Motor neuron (in vitro differentiated cells): ENCODE measurements at regions of chr16 and their contacts with region 1.

Region 1: DNA sequence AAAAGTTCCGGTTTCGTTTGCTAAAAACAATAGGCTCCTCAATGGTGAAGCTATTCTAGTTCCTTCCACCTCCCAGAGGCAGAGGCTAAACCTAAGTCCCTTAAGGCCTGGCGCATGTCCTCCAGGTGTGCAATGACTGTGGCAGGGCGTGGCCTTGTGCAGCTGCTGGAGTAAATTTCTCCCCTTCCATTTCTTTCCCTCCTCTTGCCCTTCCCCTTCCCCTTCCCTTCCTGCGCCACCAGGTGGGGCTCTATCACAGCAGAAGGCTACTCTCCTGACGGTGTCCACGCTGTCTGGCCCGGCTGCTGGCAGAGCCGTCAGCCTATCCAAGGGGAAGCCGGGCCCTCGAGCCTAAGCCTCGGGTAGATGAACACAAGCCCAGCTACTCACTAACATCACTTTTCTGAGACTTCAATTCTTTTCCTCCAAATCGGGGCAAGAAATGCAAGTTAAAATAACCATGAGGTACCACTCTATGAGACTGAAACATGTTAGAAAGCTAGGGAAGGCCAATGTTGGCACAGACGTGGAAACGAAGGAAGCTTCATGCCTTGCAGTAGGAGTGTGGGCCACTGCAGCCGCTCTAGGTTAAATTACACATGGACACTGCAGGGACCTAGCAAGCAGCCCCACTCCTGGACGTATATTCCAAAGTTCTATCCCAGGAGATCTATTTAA is 34.4 kb downstream of the C16orf78 start:
- ATAC-seq: peak; percentile 99 to 100 (median 100)
- H3K4me3 ChIP-seq: no peak overlapping the region
- H3K27ac ChIP-seq: no peak overlapping the region
- H3K4me1 ChIP-seq: peaks cover 4 to 13% of the 10 kb centered on the region in 2 donors

Region 2: GRCh38 chr16:49592546-49593423 is 184.8 kb after region 1 on chr16:
- in situ Hi-C with region 1: loop called in 1 of 9 experiments (anchors 25 kb)
- ATAC-seq: peak in 4 of 8 experiments; percentile 15 to 33 (median 29)
- H3K4me3 ChIP-seq: no peak overlapping the region
- H3K27ac ChIP-seq: no peak overlapping the region
- H3K4me1 ChIP-seq: peaks cover 54 to 68% of the 10 kb centered on the region in 2 donors

Region 3: GRCh38 chr16:49921791-49922456 is 513.9 kb after region 1 on chr16:
- in situ Hi-C with region 1: loop called in 6 of 9 experiments (anchors 25 kb)
- ATAC-seq: peak; percentile 89 to 98 (median 94)
- H3K4me3 ChIP-seq: no peak overlapping the region
- H3K27ac ChIP-seq: no peak overlapping the region
- H3K4me1 ChIP-seq: peaks cover 3 to 8% of the 10 kb centered on the region in 2 donors